ENCODE measurements at regions of chr16 and their contacts with region 1.

Region 1: GRCh38 chr16:14629919-14630619 is at the start of gene PARN:
- DNase-seq: peak; percentile 97 to 98 (median 97)
- ATAC-seq: peak; percentile 61 to 87 (median 78)
- H3K4me3 ChIP-seq: peak within 1 kb of the TSS; percentile 74 to 94 (median 91)
- H3K27ac ChIP-seq: peak within 1 kb of the TSS; percentile 77 to 97 (median 92)
- H3K4me1 ChIP-seq: peaks cover 5 to 47% (median 32%) of the 10 kb centered on the region in 12 donors
- H3K27me3 ChIP-seq: no peaks in the 10 kb centered on the region
- CTCF ChIP-seq: no peak
- POLR2A ChIP-seq: peak; percentile 83 to 95
- total RNA-seq, gene PARN: 16.3 to 25.9 (median 20.3) TPM

Region 2: DNA sequence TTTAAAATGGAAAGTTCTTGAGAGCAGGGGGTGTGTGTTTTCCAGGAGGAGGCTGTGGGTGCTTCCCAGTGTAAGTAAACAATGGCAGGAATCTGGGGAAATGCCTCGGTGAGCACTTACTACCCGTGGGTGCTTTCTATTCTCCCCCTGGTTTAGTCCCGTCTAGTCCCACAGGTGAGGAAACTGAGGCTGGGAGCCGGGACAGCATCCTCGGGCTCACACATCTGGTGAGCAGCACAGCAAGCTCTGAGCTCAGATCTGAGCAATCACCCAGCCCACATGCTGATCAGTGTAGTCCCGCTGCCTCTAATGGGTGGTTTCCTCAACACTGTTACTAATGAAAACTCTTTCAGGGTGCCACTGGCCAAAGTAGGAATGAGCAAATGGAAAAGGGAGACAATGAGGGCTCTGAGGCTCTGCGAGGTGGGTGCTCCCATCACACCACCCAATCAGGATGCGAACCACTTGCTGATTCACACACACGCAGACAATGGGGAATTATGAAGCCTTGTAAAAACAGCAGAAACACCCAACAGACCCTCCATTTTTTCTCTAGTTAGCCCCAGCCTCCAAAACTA is 202.6 kb before region 1 on chr16:
- intact Hi-C with region 1: no loop called
- DNase-seq: no peak
- ATAC-seq: peak in 1 of 4 donors; percentile 45
- H3K4me3 ChIP-seq: no peak overlapping the region
- H3K27ac ChIP-seq: no peak overlapping the region
- H3K4me1 ChIP-seq: peaks cover 0 to 5% (median 0%) of the 10 kb centered on the region in 12 donors
- H3K27me3 ChIP-seq: no peaks in the 10 kb centered on the region
- CTCF ChIP-seq: no peak
- POLR2A ChIP-seq: no peak

Region 3: DNA sequence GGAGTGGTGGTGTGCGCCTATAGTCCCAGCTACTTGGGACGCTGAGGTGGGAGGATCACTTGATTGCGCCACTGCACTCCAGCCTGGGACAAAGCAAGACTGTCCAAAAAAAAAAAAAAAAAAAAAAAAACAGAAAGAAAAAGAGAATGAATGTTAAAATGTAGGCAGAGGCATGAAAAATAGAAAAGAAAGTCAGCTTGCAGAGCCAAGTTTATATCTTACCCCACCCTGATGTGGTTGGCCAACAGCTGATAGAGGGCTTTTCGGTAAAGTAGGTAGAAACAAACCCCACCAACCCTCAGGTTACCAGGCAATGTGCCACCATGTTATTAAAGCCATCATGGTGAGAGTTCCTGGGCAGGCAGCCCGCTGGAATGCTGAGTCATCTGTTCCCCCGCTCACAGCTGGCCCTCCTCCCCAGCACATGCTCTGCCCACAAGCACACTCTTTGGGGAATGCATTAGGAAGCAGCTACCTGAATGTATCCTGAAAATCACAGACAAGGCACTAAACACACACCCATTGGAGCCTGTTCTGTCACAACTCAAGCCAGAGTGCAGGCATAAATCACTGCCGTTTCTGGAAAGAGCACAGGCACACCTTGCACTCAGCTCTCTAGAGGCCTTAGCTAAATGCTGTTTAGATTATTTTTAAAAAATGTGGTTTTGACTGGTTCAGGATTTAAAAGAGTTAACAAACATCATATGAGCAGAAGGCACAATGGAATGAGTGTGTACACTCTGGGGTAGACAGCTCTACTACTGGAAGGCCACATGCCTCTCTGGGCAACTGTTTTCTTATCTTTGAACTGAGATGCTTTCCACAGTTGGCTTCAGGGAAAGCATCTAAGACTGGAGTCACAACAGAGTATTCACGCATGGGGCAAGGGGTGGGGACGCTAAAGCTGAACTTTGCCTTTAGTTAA is 128.5 kb before region 1 on chr16:
- intact Hi-C with region 1: no loop called
- DNase-seq: peak; percentile 79 to 90 (median 83)
- ATAC-seq: peak; percentile 89 to 95 (median 90)
- H3K4me3 ChIP-seq: no peak overlapping the region
- H3K27ac ChIP-seq: peak overlapping the region; percentile 19 to 86 (median 76)
- H3K4me1 ChIP-seq: peaks cover 0 to 65% (median 26%) of the 10 kb centered on the region in 12 donors
- H3K27me3 ChIP-seq: no peaks in the 10 kb centered on the region
- CTCF ChIP-seq: no peak
- POLR2A ChIP-seq: no peak

Region 4: GRCh38 chr16:14562691-14563491 is 67.2 kb before region 1 on chr16:
- intact Hi-C with region 1: loop called in 1 of 10 experiments (anchors 10 kb)
- DNase-seq: peak in 4 of 5 donors; percentile 21 to 54 (median 38)
- ATAC-seq: peak; percentile 73 to 87 (median 80)
- H3K4me3 ChIP-seq: no peak overlapping the region
- H3K27ac ChIP-seq: peak overlapping the region in 1 of 12 donors; percentile 5
- H3K4me1 ChIP-seq: peaks cover 0 to 34% (median 14%) of the 10 kb centered on the region in 12 donors
- H3K27me3 ChIP-seq: no peaks in the 10 kb centered on the region
- CTCF ChIP-seq: peak in 5 of 12 donors; percentile 12 to 39 (median 21)
- POLR2A ChIP-seq: no peak